Activated naive CD4-positive, alpha-beta T cell treated with anti-CD3 and anti-CD28 coated beads for 36 hours (primary cell): ENCODE measurements at regions of chr3 and their contacts with region 1.

Region 1: DNA sequence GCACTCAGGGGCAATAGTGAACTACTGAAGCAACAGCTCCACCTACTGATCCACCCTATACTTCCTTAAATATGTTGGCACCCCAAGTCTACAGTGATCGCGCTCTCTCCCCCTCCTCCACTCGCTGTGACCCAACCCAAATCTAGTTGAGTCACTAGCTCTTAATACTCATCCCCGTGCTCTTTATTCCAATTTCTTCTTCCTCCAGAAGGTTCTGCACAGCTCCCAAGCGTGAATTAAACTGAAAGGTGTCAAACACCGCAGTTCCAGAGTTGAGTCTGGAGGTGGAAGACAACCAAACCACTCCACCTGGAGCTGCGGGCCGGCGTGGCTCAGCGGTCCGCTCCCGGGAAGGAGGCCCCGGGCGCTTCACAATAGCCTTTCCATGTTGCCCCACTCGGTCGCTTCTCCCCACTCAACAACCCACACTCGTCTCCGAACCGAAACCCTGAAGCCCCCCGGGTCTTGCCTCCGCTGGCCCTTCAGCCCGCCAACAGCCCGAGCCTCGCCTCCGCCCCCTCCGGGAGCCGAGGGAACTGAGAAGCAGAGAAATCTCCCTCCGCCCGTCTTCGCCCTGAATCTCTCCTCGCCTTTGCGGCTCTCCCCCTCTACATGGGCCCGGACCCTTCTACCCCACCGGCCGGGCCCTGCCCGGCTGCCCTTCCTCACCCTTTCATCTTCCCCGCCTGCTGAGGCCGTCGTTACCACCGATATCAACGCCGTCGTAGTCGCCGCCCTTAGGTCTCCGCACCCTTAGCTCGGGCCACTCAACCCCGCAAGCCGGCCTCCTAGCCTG is 578 bp downstream of the NAA50 start:
- DNase-seq: peak; percentile 92
- H3K4me3 Mint-ChIP-seq: peak overlapping the region; percentile 98
- H3K27ac Mint-ChIP-seq: peak overlapping the region; percentile 100
- H3K4me1 Mint-ChIP-seq: peaks cover 63% of the 10 kb centered on the region
- H3K27me3 Mint-ChIP-seq: no peaks in the 10 kb centered on the region

Region 2: DNA sequence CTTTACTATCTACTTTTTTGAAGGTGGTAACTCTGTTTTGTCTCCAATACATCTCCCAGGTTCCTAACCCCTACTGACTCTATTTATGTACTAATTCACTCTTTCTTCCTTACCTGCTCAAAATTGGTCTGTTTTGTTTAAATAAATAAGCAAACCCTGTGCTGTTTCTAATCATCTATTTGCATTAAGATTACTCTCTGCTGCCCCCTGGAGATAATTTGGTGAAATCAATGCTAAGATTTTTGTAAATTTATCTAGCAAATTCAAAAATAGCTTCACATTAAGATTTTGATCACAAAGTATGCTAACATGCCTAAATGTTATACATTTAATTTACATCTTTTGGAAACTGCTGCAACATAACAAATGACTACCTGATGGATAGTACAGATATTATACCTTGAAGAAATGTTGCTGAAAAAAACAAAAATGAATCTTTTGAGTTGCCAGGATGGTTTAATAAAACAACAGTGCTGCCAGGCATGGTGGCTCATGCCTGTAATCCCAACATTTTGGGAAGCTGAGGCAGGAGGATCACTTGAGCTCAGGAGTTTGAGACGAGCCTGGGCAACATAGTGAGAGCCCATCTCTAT is 766.1 kb before region 1 on chr3:
- CTCF ChIA-PET with region 1: no interaction called
- intact Hi-C with region 1: no loop called
- DNase-seq: no peak
- H3K4me3 Mint-ChIP-seq: no peak overlapping the region
- H3K27ac Mint-ChIP-seq: no peak overlapping the region
- H3K4me1 Mint-ChIP-seq: peaks cover 64% of the 10 kb centered on the region
- H3K27me3 Mint-ChIP-seq: no peaks in the 10 kb centered on the region

Region 3: GRCh38 chr3:113019182-113020137 is 726.0 kb before region 1 on chr3:
- CTCF ChIA-PET with region 1: no interaction called
- intact Hi-C with region 1: loop called (anchors 1 kb)
- DNase-seq: peak; percentile 94
- H3K4me3 Mint-ChIP-seq: peak overlapping the region; percentile 94
- H3K27ac Mint-ChIP-seq: peak overlapping the region; percentile 99
- H3K4me1 Mint-ChIP-seq: peaks cover 64% of the 10 kb centered on the region
- H3K27me3 Mint-ChIP-seq: no peaks in the 10 kb centered on the region

Region 4: GRCh38 chr3:113514265-113514769 is 231.2 kb before region 1 on chr3:
- CTCF ChIA-PET with region 1: interaction called, 7 read pairs
- intact Hi-C with region 1: loop called (anchors 1 kb)
- DNase-seq: no peak
- H3K4me3 Mint-ChIP-seq: no peak overlapping the region
- H3K27ac Mint-ChIP-seq: no peak overlapping the region
- H3K4me1 Mint-ChIP-seq: peaks cover 12% of the 10 kb centered on the region
- H3K27me3 Mint-ChIP-seq: peaks cover 12% of the 10 kb centered on the region

Region 5: DNA sequence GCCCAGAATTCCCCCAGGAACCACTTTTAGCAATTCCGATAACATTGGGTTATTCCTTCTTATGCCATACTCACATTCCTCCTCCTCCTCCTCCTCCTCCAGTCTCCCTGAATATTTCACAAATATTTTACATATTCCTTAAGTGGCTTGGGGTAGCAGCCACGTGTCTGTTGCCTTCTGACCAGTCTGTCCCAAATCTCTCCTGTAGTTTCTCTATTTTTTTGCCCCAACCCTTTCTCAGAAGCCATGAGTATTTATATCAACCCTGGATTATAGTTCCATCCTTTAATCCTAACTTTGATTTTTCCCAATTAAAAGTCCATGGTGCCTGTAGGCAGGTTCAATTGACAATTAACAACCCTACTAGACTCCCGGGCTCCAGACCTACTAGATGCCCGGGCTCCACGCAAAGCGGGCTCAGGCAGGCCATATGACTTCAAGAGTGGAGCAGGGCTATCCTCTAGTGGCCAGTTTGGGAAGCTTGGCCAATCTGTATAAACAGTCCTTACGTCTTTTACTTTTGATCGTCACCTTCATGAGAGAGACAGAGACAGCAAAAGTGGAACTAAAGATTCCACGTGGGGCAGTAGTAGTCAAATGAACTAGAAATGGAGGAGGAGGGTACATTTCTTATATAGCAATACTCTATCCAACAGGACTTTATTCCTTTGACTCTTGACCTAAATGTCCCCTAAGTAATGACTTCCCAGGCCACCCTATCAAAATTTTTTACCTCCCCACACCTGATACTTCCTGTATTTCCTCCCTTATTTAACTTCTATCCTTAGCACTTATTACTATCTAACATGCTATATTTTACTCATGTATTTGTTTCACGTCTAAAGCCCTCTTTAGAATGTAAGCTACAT is 118.7 kb before region 1 on chr3:
- CTCF ChIA-PET with region 1: no interaction called
- intact Hi-C with region 1: loop called (anchors 5 kb)
- DNase-seq: peak; percentile 44
- H3K4me3 Mint-ChIP-seq: no peak overlapping the region
- H3K27ac Mint-ChIP-seq: no peak overlapping the region
- H3K4me1 Mint-ChIP-seq: no peaks in the 10 kb centered on the region
- H3K27me3 Mint-ChIP-seq: no peaks in the 10 kb centered on the region

Region 6: GRCh38 chr3:113707835-113708234 is 37.6 kb before region 1 on chr3:
- CTCF ChIA-PET with region 1: no interaction called
- intact Hi-C with region 1: no loop called
- DNase-seq: no peak
- H3K4me3 Mint-ChIP-seq: no peak overlapping the region
- H3K27ac Mint-ChIP-seq: no peak overlapping the region
- H3K4me1 Mint-ChIP-seq: peaks cover 2% of the 10 kb centered on the region
- H3K27me3 Mint-ChIP-seq: peaks cover 14% of the 10 kb centered on the region

Region 7: GRCh38 chr3:113947372-113948014 is 202.0 kb after region 1 on chr3 and contains the start of gene ZDHHC23:
- CTCF ChIA-PET with region 1: no interaction called
- intact Hi-C with region 1: loop called (anchors 2 kb)
- DNase-seq: peak; percentile 61
- H3K4me3 Mint-ChIP-seq: peak within 1 kb of the TSS; percentile 68
- H3K27ac Mint-ChIP-seq: no peak within 1 kb of the TSS
- H3K4me1 Mint-ChIP-seq: peaks cover 11% of the 10 kb centered on the region
- H3K27me3 Mint-ChIP-seq: peaks cover 13% of the 10 kb centered on the region
- total RNA-seq, gene ZDHHC23: 5.4 TPM

Region 8: GRCh38 chr3:114122027-114122709 is 376.7 kb after region 1 on chr3:
- CTCF ChIA-PET with region 1: no interaction called
- intact Hi-C with region 1: no loop called
- DNase-seq: no peak
- H3K4me3 Mint-ChIP-seq: no peak overlapping the region
- H3K27ac Mint-ChIP-seq: no peak overlapping the region
- H3K4me1 Mint-ChIP-seq: no peaks in the 10 kb centered on the region
- H3K27me3 Mint-ChIP-seq: no peaks in the 10 kb centered on the region

Region 9: DNA sequence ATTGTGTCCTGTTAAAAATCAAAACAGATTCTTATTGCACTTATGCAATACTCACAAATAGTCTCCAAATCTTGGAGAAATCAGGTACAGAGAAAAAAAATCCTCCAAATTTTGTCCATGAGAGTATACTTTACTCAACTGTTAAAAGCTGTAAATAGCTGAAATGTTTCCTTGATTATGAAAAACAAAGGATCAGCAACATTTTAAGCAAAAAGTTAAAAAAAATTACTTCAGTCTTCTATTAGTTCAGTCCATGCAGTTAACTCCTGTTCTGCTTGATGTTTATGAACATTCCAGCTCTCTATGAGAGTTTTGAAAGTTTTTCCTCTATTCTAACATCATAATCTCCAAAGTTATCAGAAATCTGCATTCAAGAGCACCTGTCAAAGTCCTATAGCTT is 514.7 kb after region 1 on chr3:
- CTCF ChIA-PET with region 1: no interaction called
- intact Hi-C with region 1: no loop called
- DNase-seq: no peak
- H3K4me3 Mint-ChIP-seq: no peak overlapping the region
- H3K27ac Mint-ChIP-seq: no peak overlapping the region
- H3K4me1 Mint-ChIP-seq: peaks cover 2% of the 10 kb centered on the region
- H3K27me3 Mint-ChIP-seq: no peaks in the 10 kb centered on the region

Region 10: GRCh38 chr3:115147329-115148141 is 1402.1 kb after region 1 on chr3:
- CTCF ChIA-PET with region 1: no interaction called
- intact Hi-C with region 1: loop called (anchors 1 kb)
- DNase-seq: peak; percentile 98
- H3K4me3 Mint-ChIP-seq: peak overlapping the region; percentile 82
- H3K27ac Mint-ChIP-seq: peak overlapping the region; percentile 96
- H3K4me1 Mint-ChIP-seq: peaks cover 20% of the 10 kb centered on the region
- H3K27me3 Mint-ChIP-seq: no peaks in the 10 kb centered on the region